ENCODE measurements at regions of chr4 and their contacts with region 1.

Region 1: GRCh38 chr4:100082852-100083251 is 107.4 kb downstream of the DDIT4L start:
- DNase-seq: no peak

Region 2: GRCh38 chr4:100070868-100071267 is 12.0 kb before region 1 on chr4:
- CTCF ChIA-PET with region 1: no interaction called
- POLR2A ChIA-PET with region 1: no interaction called
- DNase-seq: no peak

Region 3: DNA sequence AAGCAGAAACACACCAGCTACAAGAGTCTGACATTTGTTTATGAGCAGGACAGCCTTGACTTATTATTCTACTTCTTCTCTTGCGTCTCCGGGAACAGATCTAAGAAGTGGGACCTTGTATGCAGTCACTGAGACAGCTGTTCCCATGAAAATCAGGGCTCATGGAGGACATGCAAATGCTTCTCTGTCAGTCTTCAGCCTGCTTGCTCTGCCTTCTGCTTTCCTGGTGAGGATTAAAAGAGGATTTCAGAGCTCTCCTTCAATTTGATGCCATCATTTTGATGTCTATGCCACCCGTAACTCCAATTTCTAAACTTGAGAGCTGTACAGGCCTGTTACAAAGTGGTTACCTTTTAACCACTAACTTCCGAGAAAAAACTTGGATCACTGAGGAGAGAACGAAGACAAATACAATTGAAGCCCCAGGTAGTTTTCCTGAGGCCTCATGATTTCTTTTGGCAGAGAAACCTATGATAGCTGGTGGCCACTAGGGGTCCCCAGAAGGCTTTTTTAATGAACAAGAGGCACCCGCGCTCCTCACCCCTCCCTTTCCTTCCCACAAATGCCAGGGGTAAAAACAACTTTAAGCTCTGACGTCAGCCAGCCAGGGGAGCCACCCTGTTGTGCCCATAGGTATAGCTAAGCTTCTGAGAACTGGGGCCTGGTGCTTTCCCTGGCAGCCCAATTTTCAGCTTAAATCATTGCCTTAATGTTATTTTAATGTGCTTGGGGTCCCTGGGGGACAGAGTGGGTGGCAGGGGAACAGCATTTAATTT is 10.4 kb after region 1 on chr4:
- CTCF ChIA-PET with region 1: interaction called, 12 read pairs
- POLR2A ChIA-PET with region 1: no interaction called
- DNase-seq: peak; percentile 67

Measured in HEK293T (cell line).